ENCODE measurements at regions of chr1 and their contacts with region 1.

Region 1: GRCh38 chr1:37676281-37677243 is 15.8 kb upstream of the CDCA8 start:
- DNase-seq: peak; percentile 64
- CTCF ChIP-seq: peak; percentile 23

Region 2: DNA sequence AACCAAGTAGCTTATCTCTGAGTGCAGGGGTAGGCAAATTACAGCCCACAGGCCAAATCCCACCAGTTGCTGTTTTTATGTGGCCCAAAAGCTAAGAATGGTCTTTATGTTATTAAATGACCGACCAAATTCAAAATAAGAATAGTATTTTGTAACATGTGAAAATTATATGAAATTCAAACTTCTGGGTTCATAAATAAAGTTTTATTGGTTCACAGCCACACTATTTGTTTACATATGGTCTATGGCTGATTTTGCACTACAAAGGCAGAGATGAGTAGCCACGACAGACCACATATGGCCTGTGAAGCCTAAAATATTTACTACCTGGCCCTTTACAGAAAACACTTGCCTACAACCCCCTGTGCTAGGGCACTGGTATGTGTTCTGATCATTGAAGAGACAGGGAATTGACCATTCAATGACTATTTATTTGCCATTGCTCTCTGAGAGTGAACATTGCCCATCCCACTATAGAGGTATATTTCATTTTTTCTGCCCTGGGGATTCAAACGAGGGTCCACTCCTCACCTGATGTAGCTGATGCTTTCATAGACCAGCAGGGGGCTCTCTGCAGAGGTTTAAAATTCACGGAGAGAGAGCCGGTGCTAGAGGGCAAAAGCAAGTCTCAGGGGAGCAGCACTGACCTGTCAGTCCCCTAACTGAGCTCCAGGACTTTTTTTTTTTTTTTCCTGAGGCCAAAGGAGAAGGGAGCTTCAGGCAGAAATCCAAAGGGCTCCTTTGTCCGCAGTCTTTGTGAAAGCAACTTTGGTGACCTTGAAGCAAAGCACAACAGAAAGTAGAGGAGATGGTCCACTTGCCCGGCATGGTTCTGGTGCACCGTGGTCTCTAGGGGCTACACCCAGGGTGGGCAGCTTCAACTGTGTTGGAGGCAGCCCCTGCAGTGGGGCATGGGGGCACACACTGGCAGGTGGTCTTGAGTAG is 73.5 kb before region 1 on chr1:
- in situ Hi-C with region 1: loop called (anchors 10 kb)
- DNase-seq: peak; percentile 77
- CTCF ChIP-seq: peak; percentile 53

Region 3: GRCh38 chr1:38191461-38191860 is 514.9 kb after region 1 on chr1:
- in situ Hi-C with region 1: no loop called
- DNase-seq: no peak
- CTCF ChIP-seq: no peak

Measured in GM13976 (cell line).